Sciatic nerve (tissue), 2 donors: ENCODE measurements at regions of chr7 and their contacts with region 1.

Region 1: GRCh38 chr7:115249080-115249479 is 327.2 kb downstream of the MDFIC start:
- DNase-seq: no peak
- ATAC-seq: no peak

Region 2: GRCh38 chr7:115230882-115231571 is 18.1 kb before region 1 on chr7:
- intact Hi-C with region 1: loop called (anchors 1 kb)
- DNase-seq: no peak
- ATAC-seq: peak; percentile 41